Colonic mucosa (tissue), 4 donors: ENCODE measurements at regions of chr15 and their contacts with region 1.

Region 1: DNA sequence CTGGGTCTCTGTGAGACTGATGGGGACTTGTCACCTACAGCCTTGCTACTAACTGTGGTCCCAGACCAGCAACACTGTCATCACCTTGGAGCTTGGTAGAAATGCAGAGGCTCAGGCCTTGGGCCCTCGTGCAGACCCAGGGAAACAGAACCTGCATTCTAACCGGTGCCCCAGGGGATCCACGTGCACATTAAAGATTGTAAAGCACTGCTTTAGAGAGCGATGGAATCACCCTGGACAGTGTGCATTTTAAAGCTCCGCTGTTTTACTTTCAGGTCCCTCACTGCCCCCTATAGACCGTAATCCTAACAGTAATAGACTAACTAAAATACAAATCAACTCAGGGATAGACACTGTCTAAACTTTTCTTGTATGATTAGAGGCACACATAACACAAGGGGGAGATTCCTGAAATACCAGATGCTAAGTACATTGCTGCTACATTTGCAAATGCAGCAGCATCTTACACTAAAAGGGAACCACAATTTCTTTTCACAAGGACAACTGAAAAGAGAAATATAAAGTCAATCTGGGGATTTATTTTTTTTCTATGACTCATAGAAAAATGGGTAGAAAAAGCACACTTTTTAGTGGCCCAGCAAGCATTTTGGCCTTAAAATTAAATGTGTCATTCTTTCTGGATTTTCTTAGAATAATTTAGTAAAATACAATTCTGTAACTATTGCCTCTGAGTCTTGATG is 10.5 kb upstream of the SH3GL3 start:
- DNase-seq: no peak
- H3K4me3 ChIP-seq: no peak overlapping the region
- H3K27ac ChIP-seq: no peak overlapping the region
- H3K4me1 ChIP-seq: no peaks in the 10 kb centered on the region
- H3K27me3 ChIP-seq: no peaks in the 10 kb centered on the region
- CTCF ChIP-seq: no peak

Region 2: DNA sequence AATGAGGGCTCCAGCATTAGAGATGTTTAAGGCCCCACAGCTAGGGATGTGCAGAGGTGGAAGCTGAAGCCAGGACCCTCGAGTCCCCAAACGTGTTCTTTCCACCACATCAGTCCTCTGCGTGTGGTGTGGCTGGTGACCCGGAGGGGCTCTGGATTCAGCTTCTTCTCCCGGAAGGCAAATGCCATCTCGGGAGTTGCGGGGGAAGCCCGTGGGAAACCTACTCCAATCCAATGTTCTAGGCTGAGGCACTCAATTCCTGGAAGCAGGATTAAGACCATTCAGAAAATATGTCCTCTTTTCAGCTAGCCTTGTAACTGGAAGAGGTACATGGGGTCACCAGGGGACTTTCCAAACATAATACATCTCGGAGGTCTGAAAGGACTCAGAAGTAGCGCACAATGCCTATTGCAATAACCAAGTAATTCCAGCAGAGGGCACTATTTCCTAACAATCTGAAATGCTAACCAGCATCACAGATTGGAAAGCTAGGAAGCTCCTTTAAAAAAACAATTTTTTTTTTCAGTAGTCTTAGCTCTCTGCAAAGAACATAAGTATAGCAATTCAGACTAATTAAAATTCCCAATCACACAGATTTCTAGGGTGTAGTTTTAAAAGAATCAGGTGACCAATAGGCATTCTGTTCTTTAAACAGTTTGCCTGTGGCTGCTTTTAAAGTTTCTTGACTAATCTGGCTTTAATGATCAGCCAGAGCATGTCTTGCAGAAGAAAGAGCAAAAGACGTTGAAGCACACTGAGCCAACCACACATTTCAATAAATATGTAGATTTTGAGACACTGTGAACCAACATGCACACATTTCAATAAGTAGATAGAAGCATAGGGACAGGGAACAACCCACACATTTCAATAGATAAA is 188.2 kb before region 1 on chr15:
- intact Hi-C with region 1: loop called (anchors 5 kb)
- DNase-seq: peak; percentile 34
- H3K4me3 ChIP-seq: no peak overlapping the region
- H3K27ac ChIP-seq: no peak overlapping the region
- H3K4me1 ChIP-seq: no peaks in the 10 kb centered on the region
- H3K27me3 ChIP-seq: no peaks in the 10 kb centered on the region
- CTCF ChIP-seq: peak; percentile 95

Region 3: GRCh38 chr15:83475551-83475950 is 38.9 kb after region 1 on chr15:
- intact Hi-C with region 1: no loop called
- DNase-seq: no peak
- H3K4me3 ChIP-seq: no peak overlapping the region
- H3K27ac ChIP-seq: no peak overlapping the region
- H3K4me1 ChIP-seq: no peaks in the 10 kb centered on the region
- H3K27me3 ChIP-seq: no peaks in the 10 kb centered on the region
- CTCF ChIP-seq: no peak